ENCODE measurements at regions of chr11 and their contacts with region 1.

Region 1: DNA sequence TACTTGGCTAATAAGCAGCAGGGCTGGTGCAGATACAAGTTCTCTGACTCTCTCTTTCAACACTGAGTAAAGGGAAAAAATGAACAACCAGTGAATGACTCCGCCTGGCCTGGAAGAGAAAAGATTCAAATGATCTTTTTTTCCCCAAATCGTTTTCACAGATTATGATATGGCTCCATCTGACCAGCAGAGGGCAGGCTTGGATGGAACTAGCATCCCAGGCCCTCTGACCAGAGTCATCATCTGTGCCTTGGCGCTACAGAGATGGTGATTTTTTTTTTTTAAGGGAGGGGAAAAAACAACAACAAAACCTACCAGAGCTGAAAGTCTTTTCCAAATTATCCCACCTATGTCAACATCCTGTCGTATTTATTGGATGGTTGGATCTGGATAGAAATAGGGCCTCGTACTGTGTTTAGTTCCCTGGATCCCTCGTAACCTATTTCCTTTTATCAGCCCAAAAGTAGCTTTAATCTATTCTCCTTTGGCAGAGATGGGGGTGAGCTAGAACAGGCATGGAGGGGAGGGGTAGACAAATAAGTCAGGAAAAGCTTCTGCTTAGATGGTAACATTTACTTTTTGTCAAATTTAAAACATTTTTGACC is 69.7 kb downstream of the PRSS23 start:
- DNase-seq: peak; percentile 69
- H3K4me3 ChIP-seq: no peak overlapping the region; a peak in 1 of 4 replicates
- H3K27ac ChIP-seq: peak overlapping the region in 1 of 2 experiments; percentile 41; a peak in 2 of 4 replicates
- H3K4me1 ChIP-seq: peaks cover 0 to 23% of the 10 kb centered on the region in 2 experiments; a peak in 1 of 4 replicates
- H3K27me3 ChIP-seq: no peaks in the 10 kb centered on the region
- CTCF ChIP-seq: peak; percentile 84
- EP300 ChIP-seq: no peak
- RAD21 ChIP-seq: peak; percentile 88

Region 2: GRCh38 chr11:86910592-86910991 is 40.5 kb after region 1 on chr11:
- CTCF ChIA-PET with region 1: interaction called, 13 read pairs
- POLR2A ChIA-PET with region 1: no interaction called
- DNase-seq: no peak
- H3K4me3 ChIP-seq: no peak overlapping the region
- H3K27ac ChIP-seq: 0 out of 4 replicates have a peak overlapping the region, but pooled peaks of 1 of the 2 experiments have one; percentile 4
- H3K4me1 ChIP-seq: peaks cover 0 to under 1% of the 10 kb centered on the region in 2 experiments; a peak in 1 of 4 replicates
- H3K27me3 ChIP-seq: no peaks in the 10 kb centered on the region
- CTCF ChIP-seq: no peak
- EP300 ChIP-seq: no peak
- RAD21 ChIP-seq: no peak

Region 3: GRCh38 chr11:86919557-86920210 is 49.6 kb after region 1 on chr11:
- CTCF ChIA-PET with region 1: interaction called, 123 read pairs
- POLR2A ChIA-PET with region 1: no interaction called
- DNase-seq: peak; percentile 56
- H3K4me3 ChIP-seq: no peak overlapping the region
- H3K27ac ChIP-seq: peak overlapping the region in 1 of 2 experiments; percentile 96; a peak in 2 of 4 replicates
- H3K4me1 ChIP-seq: peaks cover 2 to 40% of the 10 kb centered on the region in 2 experiments; a peak in 3 of 4 replicates
- H3K27me3 ChIP-seq: no peaks in the 10 kb centered on the region
- CTCF ChIP-seq: peak; percentile 76
- EP300 ChIP-seq: no peak
- RAD21 ChIP-seq: peak; percentile 86

Measured in SK-N-SH (cell line).